Dendritic cell treated with granulocyte-macrophage colony-stimulating factor and Interleukin-4, amounts not matched to agents 40 ng/mL and 50 ng/mL, for 4 days (primary cell): ENCODE measurements at regions of chr13 and their contacts with region 1.

Region 1: GRCh38 chr13:40682449-40683240 is 16.2 kb upstream of the FOXO1 start:
- H3K4me3 Mint-ChIP-seq: no peak overlapping the region
- H3K27ac Mint-ChIP-seq: no peak overlapping the region
- H3K4me1 Mint-ChIP-seq: peaks cover 10% of the 10 kb centered on the region
- H3K27me3 Mint-ChIP-seq: peaks cover 8% of the 10 kb centered on the region

Region 2: DNA sequence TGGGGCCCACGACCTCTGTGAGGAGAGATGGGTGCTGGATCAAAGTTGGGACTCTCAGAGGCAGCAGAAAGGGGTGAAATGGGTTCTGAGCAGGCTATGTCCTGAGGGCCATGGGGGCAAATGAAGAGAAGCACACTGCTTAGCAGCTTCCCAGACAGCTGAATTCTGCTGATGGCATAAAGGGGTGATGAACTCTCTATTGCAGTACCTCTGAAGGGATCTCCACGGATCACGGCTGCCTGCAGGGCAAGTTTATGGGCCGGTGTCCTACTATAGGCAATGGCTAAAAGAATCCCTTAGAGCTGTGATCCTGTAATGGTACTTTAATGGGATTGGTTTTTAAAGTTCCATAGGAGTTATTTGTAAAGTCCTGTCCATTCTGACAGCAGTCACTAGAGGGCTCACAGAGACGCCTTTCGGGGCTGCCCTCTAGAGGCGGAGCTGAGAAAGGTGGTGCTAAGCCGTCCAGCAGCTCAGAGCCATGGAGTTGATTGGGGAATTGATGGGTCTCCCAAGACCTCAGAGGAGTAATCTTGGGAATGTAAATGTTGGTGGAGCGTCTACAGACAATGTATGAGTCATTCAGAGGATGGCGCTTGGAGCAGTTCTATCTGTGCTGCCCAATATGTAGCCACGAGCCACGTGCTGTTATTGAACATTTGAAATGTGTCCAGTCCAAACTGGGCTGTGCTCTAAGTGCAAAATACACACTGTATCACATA is 739.9 kb before region 1 on chr13:
- intact Hi-C with region 1: loop called (anchors 2 kb)
- H3K4me3 Mint-ChIP-seq: no peak overlapping the region
- H3K27ac Mint-ChIP-seq: no peak overlapping the region
- H3K4me1 Mint-ChIP-seq: no peaks in the 10 kb centered on the region
- H3K27me3 Mint-ChIP-seq: no peaks in the 10 kb centered on the region

Region 3: DNA sequence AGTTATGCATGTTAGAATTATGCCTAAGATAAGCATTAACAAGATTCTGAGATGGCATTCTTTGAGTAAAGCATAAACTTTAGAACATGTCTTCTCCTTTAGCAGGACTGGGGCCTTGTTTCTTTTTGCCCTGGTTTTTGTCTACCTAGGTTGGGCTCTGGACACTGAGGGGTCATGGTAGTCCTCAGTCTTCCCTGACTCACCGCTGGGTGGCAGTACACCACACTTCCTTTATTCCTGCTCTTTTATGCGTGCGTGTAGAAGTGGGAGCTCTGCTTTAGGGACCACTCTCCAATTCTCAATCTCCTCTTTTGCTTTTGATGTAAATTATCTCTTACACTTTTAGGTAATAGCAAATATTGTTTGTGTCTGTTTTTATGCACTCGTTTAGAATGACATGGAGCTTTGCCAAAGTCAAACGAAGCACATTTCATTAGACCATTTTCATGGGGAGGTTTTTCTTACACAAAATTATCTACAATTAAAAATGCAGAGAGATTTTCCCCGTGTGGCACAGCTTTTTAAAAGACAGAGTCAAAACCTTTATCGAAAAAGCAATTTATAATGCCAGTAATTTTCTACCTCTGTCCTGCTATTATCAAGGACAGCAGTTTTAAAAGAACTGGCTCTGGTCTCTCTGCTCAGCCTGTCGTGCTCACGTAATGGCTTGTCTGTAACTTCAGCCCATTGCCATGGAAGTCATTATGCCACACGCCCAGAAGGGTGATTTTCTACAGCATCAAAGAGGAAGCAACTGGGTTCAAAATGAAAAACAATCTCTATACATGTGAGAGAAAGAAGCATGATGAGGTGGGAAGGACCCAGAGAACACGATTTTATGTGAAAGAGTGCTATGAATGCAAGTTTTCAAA is 613.2 kb before region 1 on chr13:
- intact Hi-C with region 1: loop called (anchors 1 kb)
- H3K4me3 Mint-ChIP-seq: no peak overlapping the region
- H3K27ac Mint-ChIP-seq: no peak overlapping the region
- H3K4me1 Mint-ChIP-seq: no peaks in the 10 kb centered on the region
- H3K27me3 Mint-ChIP-seq: no peaks in the 10 kb centered on the region

Region 4: DNA sequence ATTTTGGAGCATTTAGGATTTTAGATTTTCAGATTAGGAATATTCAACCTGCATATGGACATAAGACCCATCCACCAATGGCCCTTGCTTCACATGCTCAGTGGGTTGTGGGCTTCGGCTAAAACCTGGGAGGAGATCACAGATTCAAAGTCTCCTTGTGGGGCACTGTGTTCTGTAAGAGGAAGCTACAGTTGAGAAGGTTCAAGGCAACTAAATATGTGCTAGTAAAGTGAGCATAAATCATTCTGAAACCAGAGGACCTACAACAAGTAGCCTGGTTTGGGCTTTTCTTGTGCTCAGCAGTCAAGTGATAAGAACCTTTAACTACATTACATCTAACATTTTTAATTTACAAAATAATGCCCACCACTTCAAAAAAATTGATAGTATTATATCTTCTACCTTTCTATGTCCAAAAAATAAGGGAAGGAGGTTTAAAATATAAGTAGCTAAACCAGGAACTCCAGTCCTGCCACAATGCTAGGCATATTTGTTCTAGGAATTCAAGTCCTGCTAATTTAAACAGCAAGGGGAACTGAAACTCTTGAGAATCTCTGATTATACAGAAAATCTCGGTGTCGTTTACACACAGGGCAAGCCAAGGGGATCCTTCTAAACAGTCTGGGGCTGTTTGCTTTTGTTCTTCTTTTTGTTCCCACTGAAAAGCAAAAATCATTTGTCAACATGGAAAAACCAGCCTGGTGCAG is 52.8 kb before region 1 on chr13:
- intact Hi-C with region 1: no loop called
- H3K4me3 Mint-ChIP-seq: peak overlapping the region; percentile 32
- H3K27ac Mint-ChIP-seq: peak overlapping the region; percentile 87
- H3K4me1 Mint-ChIP-seq: peaks cover 63% of the 10 kb centered on the region
- H3K27me3 Mint-ChIP-seq: no peaks in the 10 kb centered on the region